ENCODE measurements at regions of chr17 and their contacts with region 1.

Region 1: GRCh38 chr17:34892461-34893249 is 68.6 kb downstream of the CCT6B start:
- DNase-seq: peak; percentile 51
- H3K4me3 Mint-ChIP-seq: no peak overlapping the region
- H3K27ac Mint-ChIP-seq: no peak overlapping the region
- H3K4me1 Mint-ChIP-seq: no peaks in the 10 kb centered on the region
- H3K27me3 Mint-ChIP-seq: peaks cover 98% of the 10 kb centered on the region
- CTCF ChIP-seq: peak; percentile 65

Region 2: DNA sequence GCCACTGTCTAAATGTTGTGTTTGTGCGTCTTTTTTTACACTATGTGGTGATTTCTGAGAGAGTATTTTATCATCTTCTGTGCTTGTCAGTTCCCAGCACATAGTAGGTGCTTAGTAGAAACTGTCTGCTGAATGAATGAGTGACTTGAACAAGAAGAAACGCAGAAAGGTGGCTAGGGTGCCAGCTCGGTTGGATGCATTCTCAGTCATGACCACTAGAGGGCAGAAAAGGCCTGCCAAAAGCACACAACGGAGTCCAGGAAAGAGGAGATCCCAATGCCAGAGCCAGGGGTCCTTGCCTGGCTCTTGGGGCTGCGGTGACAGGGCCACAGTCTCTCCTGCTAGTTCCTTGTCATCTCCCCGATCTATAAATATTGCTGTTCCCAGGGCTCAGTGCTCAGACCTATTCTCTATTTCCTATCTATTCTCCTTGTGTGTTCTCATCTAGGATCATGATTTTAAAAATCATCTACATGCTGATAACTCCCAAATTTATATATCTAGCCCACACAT is 472.3 kb before region 1 on chr17:
- CTCF ChIA-PET with region 1: no interaction called
- intact Hi-C with region 1: loop called (anchors 5 kb)
- DNase-seq: peak; percentile 73
- H3K4me3 Mint-ChIP-seq: no peak overlapping the region
- H3K27ac Mint-ChIP-seq: no peak overlapping the region
- H3K4me1 Mint-ChIP-seq: peaks cover 11% of the 10 kb centered on the region
- H3K27me3 Mint-ChIP-seq: peaks cover 94% of the 10 kb centered on the region
- CTCF ChIP-seq: peak; percentile 91

Region 3: DNA sequence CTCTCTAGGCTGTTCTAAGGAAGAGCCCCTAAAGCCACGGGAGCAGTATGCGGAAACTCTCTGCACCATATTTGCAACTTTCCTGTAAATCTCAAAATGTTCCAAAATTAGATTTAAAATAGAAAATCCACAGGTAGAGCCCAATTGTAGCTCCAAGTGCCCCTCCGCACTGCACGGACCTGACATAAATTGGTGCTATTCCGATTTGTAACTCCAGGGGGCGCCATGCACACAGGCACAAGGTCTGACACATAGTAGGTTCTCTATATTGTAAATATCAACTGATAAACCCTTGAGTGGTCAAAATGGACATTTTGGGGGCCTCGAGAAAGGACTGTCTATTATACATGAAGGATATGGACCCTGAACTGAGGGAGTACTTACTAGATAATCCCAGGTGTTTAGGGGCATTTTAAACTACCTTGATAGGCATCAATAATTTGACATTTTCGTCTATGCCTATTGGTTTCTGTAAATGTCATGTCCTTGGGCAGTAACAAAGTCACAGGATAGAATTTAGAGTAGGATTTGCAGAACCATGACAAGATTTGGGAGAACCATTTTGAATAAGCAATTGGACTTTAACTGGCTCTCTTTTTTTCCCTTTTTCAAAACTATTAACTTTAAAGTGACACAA is 349.8 kb before region 1 on chr17:
- CTCF ChIA-PET with region 1: interaction called, 4 read pairs
- intact Hi-C with region 1: loop called (anchors 2 kb)
- DNase-seq: peak; percentile 50
- H3K4me3 Mint-ChIP-seq: no peak overlapping the region
- H3K27ac Mint-ChIP-seq: no peak overlapping the region
- H3K4me1 Mint-ChIP-seq: no peaks in the 10 kb centered on the region
- H3K27me3 Mint-ChIP-seq: peaks cover 83% of the 10 kb centered on the region
- CTCF ChIP-seq: peak; percentile 91

Region 4: GRCh38 chr17:34584805-34585416 is 307.7 kb before region 1 on chr17:
- CTCF ChIA-PET with region 1: interaction called, 4 read pairs
- intact Hi-C with region 1: loop called (anchors 1 kb)
- DNase-seq: peak; percentile 41
- H3K4me3 Mint-ChIP-seq: no peak overlapping the region
- H3K27ac Mint-ChIP-seq: no peak overlapping the region
- H3K4me1 Mint-ChIP-seq: peaks cover 22% of the 10 kb centered on the region
- H3K27me3 Mint-ChIP-seq: peaks cover 84% of the 10 kb centered on the region
- CTCF ChIP-seq: peak; percentile 18

Region 5: GRCh38 chr17:34645594-34645993 is 247.1 kb before region 1 on chr17:
- CTCF ChIA-PET with region 1: no interaction called
- intact Hi-C with region 1: loop called (anchors 10 kb)
- DNase-seq: peak; percentile 47
- H3K4me3 Mint-ChIP-seq: no peak overlapping the region
- H3K27ac Mint-ChIP-seq: no peak overlapping the region
- H3K4me1 Mint-ChIP-seq: peaks cover 7% of the 10 kb centered on the region
- H3K27me3 Mint-ChIP-seq: peaks cover 43% of the 10 kb centered on the region
- CTCF ChIP-seq: no peak

Region 6: DNA sequence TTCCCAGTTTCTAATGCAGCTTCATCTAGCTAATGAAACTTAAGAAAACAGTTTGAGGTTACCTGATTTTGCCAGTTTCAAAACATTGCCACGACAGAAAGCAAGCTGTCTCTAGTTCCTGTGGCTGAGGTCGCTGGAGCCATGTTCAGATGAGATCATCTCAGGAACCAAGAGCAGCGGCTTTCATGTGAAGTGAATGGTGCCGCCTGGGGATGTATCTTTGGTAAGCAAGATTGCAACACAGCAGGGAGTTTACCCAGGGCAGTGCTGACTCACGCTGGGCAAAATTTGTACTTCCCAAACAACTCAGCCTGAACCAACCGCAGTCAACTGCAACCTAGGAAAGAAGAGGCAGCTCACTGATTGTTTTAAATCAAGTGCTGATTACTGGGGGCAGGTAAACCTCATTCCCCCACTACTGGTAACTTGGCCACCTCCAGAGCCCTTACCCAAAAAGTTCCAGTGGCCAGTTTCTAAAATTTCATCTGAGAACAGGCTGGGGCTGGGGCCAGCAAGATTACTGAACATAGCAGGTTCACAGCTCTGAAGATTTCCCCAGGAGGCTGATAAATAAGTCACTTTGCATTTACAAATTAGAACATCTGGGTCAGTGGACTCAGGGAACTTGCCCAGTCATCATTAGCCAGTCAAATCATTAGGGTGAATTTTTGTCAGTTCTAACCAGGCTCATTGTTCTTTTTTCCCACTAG is 171.0 kb after region 1 on chr17 and contains the start of gene RFFL:
- CTCF ChIA-PET with region 1: no interaction called
- intact Hi-C with region 1: no loop called
- DNase-seq: peak; percentile 83
- H3K4me3 Mint-ChIP-seq: peak within 1 kb of the TSS; percentile 33
- H3K27ac Mint-ChIP-seq: peak within 1 kb of the TSS; percentile 50
- H3K4me1 Mint-ChIP-seq: peaks cover 41% of the 10 kb centered on the region
- H3K27me3 Mint-ChIP-seq: no peaks in the 10 kb centered on the region
- CTCF ChIP-seq: no peak
- total RNA-seq, gene RFFL: 29.2 and 35.8 TPM in 2 replicates